ENCODE measurements at regions of chr10 and their contacts with region 1.

Region 1: GRCh38 chr10:80161331-80162083 is 29.0 kb downstream of the PLAC9 start:
- DNase-seq: peak; percentile 30 to 61 (median 51)
- H3K4me3 ChIP-seq: no peak overlapping the region
- H3K27ac ChIP-seq: no peak overlapping the region
- H3K4me1 ChIP-seq: peaks cover 0 to 21% (median 14%) of the 10 kb centered on the region in 4 experiments
- H3K27me3 ChIP-seq: no peaks in the 10 kb centered on the region

Region 2: DNA sequence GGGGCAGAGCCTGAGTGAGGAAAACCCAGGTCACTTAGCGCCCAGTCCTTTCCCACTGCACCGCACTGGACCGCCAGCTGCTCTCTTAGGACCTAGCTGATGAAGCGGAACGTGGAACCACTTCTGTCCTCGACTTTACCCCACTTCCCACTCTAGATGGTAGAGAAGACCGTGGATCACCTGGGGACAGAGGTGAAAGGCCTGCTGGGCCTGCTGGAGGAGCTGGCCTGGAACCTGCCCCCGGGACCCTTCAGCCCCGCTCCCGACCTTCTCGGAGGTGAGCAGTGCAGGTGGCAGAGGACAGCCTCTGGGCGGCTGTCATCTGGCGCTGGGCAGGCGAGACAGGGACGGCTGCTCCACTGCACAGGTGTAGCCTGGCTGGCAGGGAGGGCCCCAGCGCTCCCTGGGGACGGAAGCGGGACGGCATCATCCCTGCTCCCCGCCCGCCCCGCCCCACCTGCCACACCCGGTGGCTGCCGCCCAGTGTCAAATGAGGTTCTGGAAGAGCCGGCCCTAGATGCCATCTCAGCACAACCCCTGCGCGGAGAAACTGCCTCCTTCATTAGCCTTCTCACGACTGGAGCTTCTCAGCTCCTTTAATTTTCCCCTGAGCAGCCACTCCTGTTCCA is 17.3 kb before region 1 on chr10:
- CTCF ChIA-PET with region 1: interaction called, 25 read pairs
- POLR2A ChIA-PET with region 1: no interaction called
- DNase-seq: peak in 2 of 3 donors; percentile 24 to 39
- H3K4me3 ChIP-seq: peak overlapping the region in 6 of 7 experiments; percentile 25 to 71 (median 48)
- H3K27ac ChIP-seq: no peak overlapping the region
- H3K4me1 ChIP-seq: peaks cover 0 to 18% (median 15%) of the 10 kb centered on the region in 4 experiments
- H3K27me3 ChIP-seq: peaks cover 0 to 6% (median 3%) of the 10 kb centered on the region in 5 experiments

Region 3: DNA sequence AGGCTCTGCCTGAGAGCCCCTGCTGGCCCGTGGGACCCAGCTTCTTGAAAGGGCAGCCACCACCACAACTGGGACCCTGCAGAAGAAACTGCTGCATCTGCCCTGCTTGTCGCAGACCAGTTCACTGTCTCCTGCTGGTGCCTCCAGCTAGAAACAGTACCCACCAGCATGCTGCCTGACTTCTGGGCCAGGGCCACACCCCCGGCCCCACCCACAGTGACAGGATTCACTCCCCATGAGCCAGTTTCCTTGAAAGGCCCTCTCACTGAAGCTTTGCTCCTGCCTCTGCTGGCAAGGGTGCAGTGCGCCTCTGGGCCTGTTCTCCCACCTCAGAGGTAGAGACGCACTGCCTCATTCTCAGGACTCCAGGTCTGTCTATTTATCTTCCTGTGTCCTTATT is 11.4 kb after region 1 on chr10:
- CTCF ChIA-PET with region 1: interaction called, 16 read pairs
- POLR2A ChIA-PET with region 1: no interaction called
- DNase-seq: no peak
- H3K4me3 ChIP-seq: no peak overlapping the region
- H3K27ac ChIP-seq: no peak overlapping the region
- H3K4me1 ChIP-seq: peaks cover 0 to 3% (median 0%) of the 10 kb centered on the region in 4 experiments
- H3K27me3 ChIP-seq: no peaks in the 10 kb centered on the region

Region 4: GRCh38 chr10:80421707-80422536 is 260.4 kb after region 1 on chr10:
- CTCF ChIA-PET with region 1: no interaction called
- POLR2A ChIA-PET with region 1: no interaction called
- DNase-seq: peak in 2 of 3 donors; percentile 40 to 55
- H3K4me3 ChIP-seq: no peak overlapping the region
- H3K27ac ChIP-seq: no peak overlapping the region
- H3K4me1 ChIP-seq: peaks cover 0 to 10% (median 4%) of the 10 kb centered on the region in 4 experiments
- H3K27me3 ChIP-seq: no peaks in the 10 kb centered on the region

Region 5: DNA sequence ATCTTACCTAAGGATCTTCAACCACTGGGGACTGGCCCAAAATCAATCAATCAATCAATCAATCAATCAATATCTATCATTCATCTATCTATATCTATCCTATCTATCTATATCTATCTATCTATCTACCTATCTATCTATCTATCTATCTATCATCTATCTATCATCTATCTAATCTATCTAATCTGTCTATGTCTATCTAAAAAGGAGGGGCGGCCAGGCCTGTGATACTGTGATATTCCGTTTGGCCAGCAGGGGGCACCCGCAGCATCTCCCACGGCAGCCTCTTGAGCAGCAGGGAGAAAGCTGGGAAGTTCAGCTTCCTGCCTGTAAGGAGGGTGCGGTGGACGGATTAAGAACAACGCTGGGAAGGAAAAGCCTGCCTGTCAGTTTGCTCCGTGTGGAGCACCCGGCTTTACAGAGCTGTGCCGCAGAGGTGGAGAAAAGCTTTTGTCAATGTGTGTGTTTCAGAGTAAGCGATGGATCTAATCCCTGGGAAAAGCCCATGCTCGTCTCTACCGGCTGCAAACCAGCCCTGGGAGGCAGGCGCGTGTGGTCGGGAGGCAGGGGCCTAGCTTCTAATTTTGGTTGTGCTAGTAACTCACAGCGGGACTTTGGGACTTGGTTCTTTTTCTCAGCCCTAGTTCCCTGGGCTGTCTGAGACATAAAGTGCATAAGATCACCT is 501.2 kb after region 1 on chr10:
- CTCF ChIA-PET with region 1: no interaction called
- POLR2A ChIA-PET with region 1: no interaction called
- DNase-seq: peak; percentile 44 to 63 (median 61)
- H3K4me3 ChIP-seq: peak overlapping the region in 6 of 7 experiments; percentile 42 to 79 (median 56)
- H3K27ac ChIP-seq: no peak overlapping the region
- H3K4me1 ChIP-seq: peaks cover 7 to 23% (median 19%) of the 10 kb centered on the region in 4 experiments
- H3K27me3 ChIP-seq: no peaks in the 10 kb centered on the region